HepG2 (cell line): ENCODE measurements at regions of chr1 and their contacts with region 1.

Region 1: DNA sequence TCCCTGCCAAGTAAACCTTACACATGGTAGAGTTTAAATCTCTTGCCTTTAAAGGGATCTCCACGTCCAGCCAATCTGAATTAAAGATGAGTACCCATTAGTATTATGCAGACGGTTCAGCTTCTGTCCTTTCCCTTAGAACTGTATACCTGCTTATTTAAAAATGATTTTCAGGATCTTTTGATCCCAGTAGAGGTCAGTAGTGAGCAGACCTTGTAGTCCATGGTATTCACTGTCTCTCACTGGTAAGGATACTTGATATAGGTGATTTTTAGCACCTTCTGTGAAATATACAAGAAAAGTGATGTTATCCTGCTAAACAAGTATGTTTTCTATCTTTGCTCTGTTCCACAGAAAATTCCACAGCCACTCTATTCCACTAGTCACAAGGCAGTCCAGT is 1211.6 kb upstream of the ADGRL4 start:
- DNase-seq: peak; percentile 20
- ATAC-seq: peak; percentile 81
- H3K4me3 ChIP-seq: no peak overlapping the region
- H3K27ac ChIP-seq: no peak overlapping the region
- H3K4me1 ChIP-seq: no peaks in the 10 kb centered on the region
- H3K27me3 ChIP-seq: no peaks in the 10 kb centered on the region
- CTCF ChIP-seq: peak; percentile 37; the same call in 1 of the 2 replicates
- EP300 ChIP-seq: no peak
- POLR2A ChIP-seq: no peak
- RAD21 ChIP-seq: no peak

Region 2: GRCh38 chr1:79501140-79501539 is 717.0 kb before region 1 on chr1:
- CTCF ChIA-PET with region 1: no interaction called
- POLR2A ChIA-PET with region 1: no interaction called
- in situ Hi-C with region 1: no loop called
- intact Hi-C with region 1: loop called (anchors 10 kb)
- DNase-seq: no peak
- ATAC-seq: no peak
- H3K4me3 ChIP-seq: no peak overlapping the region
- H3K27ac ChIP-seq: no peak overlapping the region
- H3K4me1 ChIP-seq: no peaks in the 10 kb centered on the region
- H3K27me3 ChIP-seq: no peaks in the 10 kb centered on the region
- CTCF ChIP-seq: no peak
- EP300 ChIP-seq: no peak
- POLR2A ChIP-seq: no peak
- RAD21 ChIP-seq: no peak

Region 3: GRCh38 chr1:80258659-80259058 is 40.5 kb after region 1 on chr1:
- CTCF ChIA-PET with region 1: no interaction called
- POLR2A ChIA-PET with region 1: no interaction called
- in situ Hi-C with region 1: no loop called
- intact Hi-C with region 1: no loop called
- DNase-seq: no peak
- ATAC-seq: no peak
- H3K4me3 ChIP-seq: no peak overlapping the region
- H3K27ac ChIP-seq: no peak overlapping the region
- H3K4me1 ChIP-seq: no peaks in the 10 kb centered on the region
- H3K27me3 ChIP-seq: no peaks in the 10 kb centered on the region
- CTCF ChIP-seq: no peak
- EP300 ChIP-seq: no peak
- POLR2A ChIP-seq: no peak
- RAD21 ChIP-seq: no peak

Region 4: DNA sequence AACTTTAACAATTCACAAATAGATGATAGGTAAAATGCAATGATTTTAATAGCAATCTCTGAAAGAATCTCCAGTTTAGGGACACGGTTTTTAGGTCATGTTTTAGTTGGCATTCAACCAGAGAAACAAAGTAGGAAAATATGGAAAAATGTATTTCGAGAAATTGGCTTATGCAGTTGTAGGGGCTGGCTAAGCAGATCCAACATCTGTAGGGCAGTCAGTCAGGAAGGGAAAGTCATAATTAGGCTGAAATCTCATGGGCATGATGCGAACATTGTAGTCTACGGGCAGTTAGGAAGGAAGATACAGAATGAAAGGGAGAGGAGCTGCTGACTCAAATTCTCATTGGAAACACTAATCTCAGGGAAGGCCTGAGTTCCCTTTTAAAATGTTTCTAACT is 64.4 kb after region 1 on chr1:
- CTCF ChIA-PET with region 1: no interaction called
- POLR2A ChIA-PET with region 1: no interaction called
- in situ Hi-C with region 1: no loop called
- intact Hi-C with region 1: no loop called
- DNase-seq: no peak
- ATAC-seq: no peak
- H3K4me3 ChIP-seq: no peak overlapping the region
- H3K27ac ChIP-seq: no peak overlapping the region
- H3K4me1 ChIP-seq: no peaks in the 10 kb centered on the region
- H3K27me3 ChIP-seq: no peaks in the 10 kb centered on the region
- CTCF ChIP-seq: no peak
- EP300 ChIP-seq: no peak
- POLR2A ChIP-seq: no peak
- RAD21 ChIP-seq: no peak

Region 5: GRCh38 chr1:80929868-80930502 is 711.9 kb after region 1 on chr1:
- CTCF ChIA-PET with region 1: no interaction called
- POLR2A ChIA-PET with region 1: no interaction called
- in situ Hi-C with region 1: no loop called
- intact Hi-C with region 1: loop called (anchors 10 kb)
- DNase-seq: no peak
- ATAC-seq: no peak
- H3K4me3 ChIP-seq: no peak overlapping the region
- H3K27ac ChIP-seq: no peak overlapping the region
- H3K4me1 ChIP-seq: no peaks in the 10 kb centered on the region
- H3K27me3 ChIP-seq: no peaks in the 10 kb centered on the region
- CTCF ChIP-seq: 0 out of 2 replicates have a peak, but pooled peaks have one; percentile 8
- EP300 ChIP-seq: no peak
- POLR2A ChIP-seq: no peak
- RAD21 ChIP-seq: no peak